ENCODE measurements at regions of chr20 and their contacts with region 1.

Region 1: DNA sequence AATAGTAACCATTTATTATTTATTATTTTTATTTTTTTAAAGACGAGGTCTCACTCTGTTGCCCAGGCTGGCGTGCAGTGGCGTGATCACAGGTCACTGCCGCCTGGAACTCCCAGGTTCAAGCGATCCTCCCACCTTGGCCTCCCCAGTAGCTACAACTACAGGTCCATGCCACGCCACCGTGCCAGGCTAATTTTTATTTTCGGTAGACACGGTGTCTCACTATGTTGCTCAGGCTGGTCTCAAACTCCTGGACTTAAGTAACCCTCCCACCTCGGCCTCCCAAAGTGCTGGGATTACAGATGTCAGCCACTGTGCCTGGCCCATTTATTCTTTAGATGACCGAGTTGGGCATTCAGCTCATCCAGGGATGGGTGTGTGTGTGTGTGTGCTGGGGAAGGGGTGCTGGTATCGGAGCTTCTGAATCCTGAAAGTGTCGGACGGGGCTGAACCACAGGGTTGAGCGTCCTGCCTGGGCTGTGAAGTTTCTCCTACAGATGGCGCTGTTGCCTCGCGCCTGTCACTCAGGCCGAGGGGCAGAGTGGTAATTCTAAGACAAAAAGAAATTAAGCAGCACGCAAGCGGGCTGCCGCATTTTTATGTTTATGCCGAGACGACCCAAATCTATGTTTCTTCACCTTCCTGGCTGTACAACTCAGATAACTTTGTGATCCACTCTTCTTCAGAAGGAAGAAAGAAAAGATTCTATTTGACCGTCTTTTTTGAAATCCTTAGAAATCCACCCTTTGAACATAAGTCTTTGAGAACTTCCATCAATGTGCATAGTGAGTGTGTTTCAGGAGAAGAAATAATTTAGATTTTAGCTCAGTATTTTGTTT is 252.8 kb downstream of the CDH26 start:
- DNase-seq: peak; percentile 83
- ATAC-seq: peak; percentile 86

Region 2: DNA sequence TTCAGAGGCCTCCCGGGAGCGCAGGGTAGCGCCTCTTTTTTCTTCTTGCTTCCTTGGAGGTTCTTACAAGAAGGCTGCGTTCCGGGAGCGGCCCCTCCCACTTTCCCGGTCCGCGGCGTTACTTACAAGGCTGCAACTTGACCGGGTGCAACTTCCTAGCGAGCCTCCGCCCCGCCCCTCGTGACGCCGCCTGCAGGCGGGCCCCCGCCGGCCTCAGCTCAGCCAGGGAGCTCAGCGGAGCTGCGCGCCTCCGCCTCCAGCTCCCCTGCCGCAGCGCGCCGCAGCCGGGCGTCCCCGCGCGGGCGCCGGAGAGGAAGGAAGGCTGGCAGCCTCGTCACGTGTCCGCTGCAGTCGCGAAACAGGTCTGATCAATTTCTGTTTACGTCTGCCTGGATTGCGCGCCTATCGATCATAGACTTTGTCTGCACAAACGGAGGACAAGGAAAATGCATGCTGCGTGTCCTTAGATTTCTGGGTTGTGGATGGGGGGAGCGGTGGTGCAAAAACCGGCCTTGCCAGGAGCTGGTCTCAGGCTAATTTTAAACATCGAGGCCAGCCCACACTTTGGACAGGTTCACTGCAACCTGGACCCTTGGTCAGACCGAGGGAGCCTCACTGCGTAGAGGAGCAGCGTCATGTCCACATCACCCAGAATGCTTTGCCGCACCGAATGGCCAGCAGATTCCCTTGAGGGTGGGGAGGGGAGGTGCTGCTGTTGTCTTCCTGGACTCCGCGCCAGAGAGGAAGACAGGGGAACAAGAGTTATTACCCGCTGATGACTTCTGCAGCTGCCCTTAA is 270.6 kb before region 1 on chr20 and contains the starts of genes FAM217B and PPP1R3D:
- intact Hi-C with region 1: loop called (anchors 10 kb)
- DNase-seq: peak; percentile 99
- ATAC-seq: peak; percentile 96
- total RNA-seq, gene FAM217B: 40.5 TPM
- total RNA-seq, gene PPP1R3D: 13.2 TPM

Region 3: GRCh38 chr20:60057123-60057801 is 153.7 kb before region 1 on chr20:
- intact Hi-C with region 1: loop called (anchors 5 kb)
- DNase-seq: no peak
- ATAC-seq: peak; percentile 55

Region 4: GRCh38 chr20:60137629-60138245 is 73.3 kb before region 1 on chr20:
- intact Hi-C with region 1: loop called (anchors 2 kb)
- DNase-seq: no peak
- ATAC-seq: peak; percentile 40

Region 5: DNA sequence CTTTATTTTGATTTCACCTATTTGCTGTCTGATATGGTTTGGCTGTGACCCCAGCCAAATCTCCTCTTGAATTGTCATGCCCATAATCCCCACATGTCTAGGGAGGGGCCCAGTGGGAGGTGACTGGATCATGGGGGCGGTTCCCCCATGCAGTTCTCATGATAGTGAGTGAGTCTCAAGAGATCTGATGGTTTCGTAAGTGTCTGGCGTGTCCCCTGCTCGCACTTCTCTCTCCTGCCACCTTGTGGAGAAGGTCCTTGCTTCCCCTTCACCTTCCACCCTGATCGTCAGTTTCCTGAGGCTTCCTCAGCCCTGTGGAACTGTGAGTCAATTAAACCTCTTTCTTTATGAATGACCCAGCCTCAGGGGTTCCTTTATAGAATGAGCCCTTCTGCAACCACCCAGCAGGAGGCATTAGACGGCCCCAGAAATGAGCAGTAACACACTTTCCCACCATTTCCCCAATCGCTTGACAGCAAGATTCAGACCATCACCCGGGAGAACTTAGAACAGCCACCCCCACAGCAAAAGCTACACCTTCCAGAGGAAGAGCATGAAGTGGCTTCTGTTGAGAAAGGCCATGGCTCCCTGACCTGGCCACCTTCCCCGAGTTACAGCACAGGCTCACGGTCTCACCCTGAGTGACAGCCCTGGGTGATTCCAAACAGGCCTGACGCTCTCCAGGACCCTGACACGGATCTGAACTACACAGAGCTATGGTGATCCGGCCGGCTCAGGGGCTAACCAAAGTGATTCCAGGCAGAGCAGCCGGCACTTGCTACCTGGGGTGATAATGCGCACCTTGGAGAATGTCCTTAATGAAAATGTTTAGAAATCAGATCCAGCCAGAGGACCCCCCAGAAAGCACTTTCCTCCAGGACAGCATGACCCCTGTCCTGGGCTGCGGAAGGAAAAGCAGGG is 909.9 kb after region 1 on chr20:
- intact Hi-C with region 1: loop called (anchors 5 kb)
- DNase-seq: no peak
- ATAC-seq: peak; percentile 67

Region 6: GRCh38 chr20:61234803-61235113 is 1023.8 kb after region 1 on chr20:
- intact Hi-C with region 1: loop called (anchors 2 kb)
- DNase-seq: no peak
- ATAC-seq: no peak

Measured in Right ventricle myocardium inferior (tissue), 1 donor.